Motor neuron (in vitro differentiated cells): ENCODE measurements at regions of chr16 and their contacts with region 1.

Region 1: DNA sequence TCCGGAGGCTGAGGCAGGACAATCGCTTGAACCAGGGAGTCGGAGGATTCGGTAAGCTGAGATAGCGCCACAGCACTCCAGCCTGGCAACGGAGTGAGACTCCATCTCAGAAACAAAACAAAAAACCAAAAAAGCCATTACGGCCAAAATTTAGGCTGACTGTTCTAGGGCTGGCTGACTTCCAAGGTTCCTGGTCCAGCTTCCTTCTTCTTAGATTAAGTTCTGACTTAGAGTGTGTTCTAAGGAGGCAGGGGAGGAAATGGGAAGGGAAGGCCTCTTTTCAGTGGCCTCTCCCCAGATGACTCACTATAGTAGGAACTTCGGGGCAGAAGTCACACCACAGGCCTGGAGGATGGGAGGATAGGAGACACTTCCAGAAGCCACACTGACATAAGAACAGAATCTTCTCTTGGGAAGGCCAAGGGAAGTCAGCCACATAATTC is 27.7 kb upstream of the CLEC18B start:
- ATAC-seq: peak in 3 of 8 experiments; percentile 44 to 97 (median 95)
- H3K4me3 ChIP-seq: no peak overlapping the region
- H3K27ac ChIP-seq: no peak overlapping the region
- H3K4me1 ChIP-seq: no peaks in the 10 kb centered on the region

Region 2: GRCh38 chr16:74165566-74166080 is 283.4 kb before region 1 on chr16:
- in situ Hi-C with region 1: no loop called
- ATAC-seq: no peak
- H3K4me3 ChIP-seq: no peak overlapping the region
- H3K27ac ChIP-seq: no peak overlapping the region
- H3K4me1 ChIP-seq: peaks cover 0 to 11% of the 10 kb centered on the region in 2 donors

Region 3: DNA sequence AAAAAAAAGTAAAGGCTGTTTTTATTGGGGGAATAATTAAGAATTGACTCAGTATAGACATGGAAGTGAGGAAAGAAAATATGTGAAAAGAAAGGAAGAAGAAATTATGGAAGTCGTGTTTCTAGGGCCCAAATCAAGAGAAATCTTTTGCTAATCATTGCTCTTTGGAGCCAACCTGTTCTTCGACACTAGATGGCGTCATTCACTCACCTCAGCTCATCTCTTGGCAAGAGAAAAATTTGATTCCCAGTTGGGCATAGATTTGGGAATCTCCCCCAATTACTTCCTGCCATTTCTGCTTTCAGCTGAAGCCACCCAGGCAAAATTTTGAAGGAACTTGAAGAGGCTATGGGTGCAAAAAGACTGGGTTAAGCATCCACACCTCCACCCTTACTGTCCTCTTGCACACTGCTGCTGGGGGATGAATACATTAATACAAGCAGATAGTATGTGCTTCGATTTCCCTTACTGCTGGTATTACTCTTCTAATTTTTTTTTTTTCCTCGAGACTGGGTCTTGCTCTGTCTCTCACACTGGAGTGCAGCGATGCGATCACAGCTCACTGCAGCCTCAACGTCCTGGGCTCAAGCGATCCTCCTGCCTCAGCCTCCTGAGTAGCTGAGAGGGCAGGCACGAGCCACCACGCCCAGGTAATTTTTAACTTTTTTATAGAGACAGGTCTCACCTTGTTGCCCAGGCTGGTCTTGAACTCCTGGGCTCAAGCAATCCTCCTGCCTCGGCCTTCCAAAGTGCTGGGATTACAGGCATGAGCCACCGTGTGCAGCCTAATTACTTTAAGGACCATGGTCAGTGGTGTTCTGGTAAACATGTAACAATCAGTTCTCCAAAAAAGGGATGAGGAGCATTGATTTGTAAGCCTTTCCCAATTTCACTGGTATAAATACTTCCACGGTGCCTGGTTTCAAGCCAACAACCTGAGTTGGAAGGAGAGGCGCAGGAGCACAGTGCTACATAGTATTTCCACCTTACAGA is 138.9 kb before region 1 on chr16:
- in situ Hi-C with region 1: loop called in 1 of 9 experiments (anchors 25 kb)
- ATAC-seq: peak in 6 of 8 experiments; percentile 31 to 65 (median 48)
- H3K4me3 ChIP-seq: no peak overlapping the region
- H3K27ac ChIP-seq: no peak overlapping the region
- H3K4me1 ChIP-seq: no peaks in the 10 kb centered on the region

Region 4: DNA sequence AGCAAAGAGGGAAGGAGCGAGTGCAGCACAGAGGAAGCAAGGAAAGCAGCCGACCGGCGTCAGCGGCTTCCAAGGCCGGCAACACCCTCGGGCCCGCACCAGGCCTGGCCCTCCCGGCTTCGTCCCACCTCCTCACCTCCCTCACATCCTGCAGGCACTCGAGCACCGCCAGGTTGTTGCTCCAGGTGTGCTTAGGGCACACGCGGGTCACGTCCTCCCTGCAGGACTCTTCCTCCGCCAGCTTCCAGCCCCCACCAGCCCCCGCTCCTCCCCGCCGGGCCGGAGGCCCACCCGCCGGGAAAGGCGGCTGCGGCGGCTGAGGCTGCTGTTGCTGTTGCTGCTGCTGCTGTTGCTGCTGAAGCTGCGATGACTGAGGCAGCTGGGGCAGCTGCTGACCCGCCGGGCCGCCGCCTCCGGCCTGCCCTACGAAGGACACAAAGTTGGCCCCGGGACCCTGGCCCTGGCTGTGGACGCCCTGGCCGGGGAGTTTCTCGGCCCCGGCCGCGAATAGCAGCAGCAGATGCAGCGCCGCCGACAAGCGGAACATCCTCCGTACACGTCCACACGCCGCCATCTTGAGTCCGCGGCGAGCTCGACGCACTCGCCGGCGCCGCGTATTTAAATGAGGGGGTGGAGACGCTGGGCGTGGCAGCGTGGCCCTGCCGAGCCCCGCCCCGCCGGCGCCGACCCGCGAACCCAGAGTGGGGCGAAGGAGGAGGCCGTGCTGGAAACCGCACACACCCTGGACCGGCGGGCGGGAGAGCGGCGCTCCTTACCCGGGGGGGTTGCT is 157.7 kb after region 1 on chr16 and contains the start of gene GLG1:
- in situ Hi-C with region 1: loop called in 1 of 9 experiments (anchors 25 kb)
- ATAC-seq: peak; percentile 85 to 95 (median 93)
- H3K4me3 ChIP-seq: peak within 1 kb of the TSS; percentile 86 to 97 (median 91)
- H3K27ac ChIP-seq: peak within 1 kb of the TSS; percentile 97 to 100
- H3K4me1 ChIP-seq: peaks cover 15 to 21% of the 10 kb centered on the region in 2 donors
- total RNA-seq, gene GLG1: 69.9 to 171 (median 90.4) TPM

Region 5: GRCh38 chr16:74700438-74701225 is 251.6 kb after region 1 on chr16 and contains the start of gene MLKL:
- in situ Hi-C with region 1: no loop called
- ATAC-seq: peak; percentile 30 to 70 (median 48)
- H3K4me3 ChIP-seq: peak within 1 kb of the TSS in 2 of 5 donors; percentile 12 to 16
- H3K27ac ChIP-seq: no peak within 1 kb of the TSS
- H3K4me1 ChIP-seq: peaks cover 0 to 2% of the 10 kb centered on the region in 2 donors
- total RNA-seq, gene MLKL: 0.21 to 6.3 (median 1.2) TPM in 7 of 8 experiments, not detected in the other